Activated B cell treated with CpG ODN at 0.5 μM for 24 hours (primary cell): ENCODE measurements at regions of chr1 and their contacts with region 1.

Region 1: DNA sequence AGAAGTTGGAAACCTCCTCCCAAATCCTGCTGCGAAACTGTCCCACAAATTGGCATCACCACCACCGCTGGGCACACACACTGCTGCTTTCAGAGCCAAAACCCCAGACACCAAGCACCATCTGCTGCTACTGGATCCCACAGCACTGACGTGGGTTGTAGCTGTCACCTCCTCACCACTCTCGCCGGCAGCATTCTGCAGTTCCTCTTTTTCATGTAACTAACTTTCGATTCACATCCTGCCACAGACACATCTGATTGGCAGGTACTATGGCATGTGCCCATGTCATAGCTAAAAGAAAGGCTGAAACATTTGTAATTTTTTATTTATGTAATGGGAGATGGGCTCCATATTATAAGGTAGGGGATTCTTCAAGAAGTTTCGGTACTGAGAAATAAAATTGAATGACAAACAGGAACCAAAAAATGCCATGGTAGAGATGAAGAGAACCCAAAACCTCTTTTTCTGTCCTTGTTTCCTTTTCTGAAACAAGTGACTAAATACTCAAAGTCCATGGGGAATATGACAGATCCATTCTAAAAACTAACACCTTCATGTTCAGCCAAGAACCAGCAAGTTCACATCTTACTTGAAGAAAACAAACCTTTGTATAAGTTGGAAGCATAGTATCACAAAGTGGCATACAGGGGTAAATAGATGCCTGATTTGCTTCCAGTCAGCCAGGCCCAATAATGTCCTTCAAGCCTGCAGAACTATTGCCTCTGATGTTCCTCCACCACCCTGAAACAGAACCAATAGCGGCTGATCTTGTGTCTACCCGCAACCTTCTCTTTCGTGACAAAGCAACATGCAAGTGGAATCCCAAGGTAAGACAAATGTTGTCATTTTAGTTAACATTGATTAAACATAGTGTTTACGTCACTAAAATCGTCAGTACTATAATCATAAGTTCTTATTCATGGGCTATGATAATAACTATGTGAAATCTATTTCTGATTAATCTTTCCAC is 26.6 kb upstream of the RGS13 start:
- DNase-seq: peak; percentile 56
- ATAC-seq: peak; percentile 91
- H3K4me3 Mint-ChIP-seq: peak overlapping the region; percentile 57
- H3K27ac Mint-ChIP-seq: peak overlapping the region; percentile 86
- H3K4me1 Mint-ChIP-seq: peaks cover 32% of the 10 kb centered on the region
- H3K27me3 Mint-ChIP-seq: peaks cover 4% of the 10 kb centered on the region
- CTCF ChIP-seq: no peak

Region 2: DNA sequence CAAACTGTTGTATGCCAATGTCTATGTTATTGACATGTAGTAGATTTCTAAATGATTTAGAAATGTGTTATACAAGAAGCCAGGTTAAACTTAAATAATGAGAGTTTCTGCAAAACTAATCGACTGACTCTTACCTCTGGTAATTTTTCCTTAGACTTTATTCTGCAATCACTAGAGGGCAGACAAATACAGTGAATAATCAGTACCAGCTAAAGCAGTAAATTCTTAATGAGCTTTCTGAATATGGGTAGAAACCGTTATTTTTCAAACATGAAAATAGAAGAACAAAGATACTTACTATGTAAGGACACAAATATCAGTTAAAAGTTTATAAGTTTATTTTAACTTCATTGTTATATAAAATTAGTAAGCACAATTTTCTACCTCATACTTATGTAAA is 131.8 kb before region 1 on chr1:
- CTCF ChIA-PET with region 1: interaction called, 106 read pairs
- POLR2A ChIA-PET with region 1: interaction called, 6 read pairs
- intact Hi-C with region 1: loop called (anchors 1 kb)
- DNase-seq: no peak
- ATAC-seq: peak; percentile 75
- H3K4me3 Mint-ChIP-seq: no peak overlapping the region
- H3K27ac Mint-ChIP-seq: no peak overlapping the region
- H3K4me1 Mint-ChIP-seq: no peaks in the 10 kb centered on the region
- H3K27me3 Mint-ChIP-seq: peaks cover 7% of the 10 kb centered on the region
- CTCF ChIP-seq: peak; percentile 26

Region 3: DNA sequence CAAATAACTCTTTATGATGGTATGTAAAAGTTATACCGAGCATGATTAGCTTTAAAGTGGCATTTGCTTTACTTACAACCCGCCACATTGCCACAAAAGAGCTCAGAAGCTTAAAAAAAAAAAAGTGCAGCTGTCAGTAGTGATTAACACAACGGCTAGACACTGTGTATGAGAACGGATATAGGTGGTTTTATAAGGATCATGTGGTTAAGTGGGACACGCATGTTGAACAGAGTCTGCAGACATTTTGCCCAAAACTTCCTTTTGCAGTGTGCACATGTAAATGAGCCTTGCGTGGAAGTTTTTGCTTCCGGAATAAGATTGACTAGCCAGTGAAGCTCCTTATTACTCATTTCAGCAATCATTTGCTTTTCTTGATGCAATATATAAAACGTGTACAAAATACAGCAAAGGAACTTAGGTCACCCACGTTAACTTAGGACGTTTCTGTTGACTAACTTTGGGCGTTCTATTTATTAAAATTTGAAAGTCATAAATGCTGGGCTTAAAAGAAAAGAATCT is 92.6 kb before region 1 on chr1:
- CTCF ChIA-PET with region 1: interaction called, 9 read pairs
- POLR2A ChIA-PET with region 1: interaction called, 10 read pairs
- intact Hi-C with region 1: loop called (anchors 1 kb)
- DNase-seq: peak; percentile 23
- ATAC-seq: peak; percentile 96
- H3K4me3 Mint-ChIP-seq: peak overlapping the region; percentile 75
- H3K27ac Mint-ChIP-seq: peak overlapping the region; percentile 65
- H3K4me1 Mint-ChIP-seq: peaks cover 59% of the 10 kb centered on the region
- H3K27me3 Mint-ChIP-seq: no peaks in the 10 kb centered on the region
- CTCF ChIP-seq: no peak

Region 4: GRCh38 chr1:192545896-192546521 is 63.4 kb before region 1 on chr1:
- CTCF ChIA-PET with region 1: interaction called, 3 read pairs
- POLR2A ChIA-PET with region 1: interaction called, 12 read pairs
- intact Hi-C with region 1: loop called (anchors 1 kb)
- DNase-seq: no peak
- ATAC-seq: peak; percentile 66
- H3K4me3 Mint-ChIP-seq: peak overlapping the region; percentile 65
- H3K27ac Mint-ChIP-seq: peak overlapping the region; percentile 84
- H3K4me1 Mint-ChIP-seq: peaks cover 60% of the 10 kb centered on the region
- H3K27me3 Mint-ChIP-seq: no peaks in the 10 kb centered on the region
- CTCF ChIP-seq: no peak

Region 5: DNA sequence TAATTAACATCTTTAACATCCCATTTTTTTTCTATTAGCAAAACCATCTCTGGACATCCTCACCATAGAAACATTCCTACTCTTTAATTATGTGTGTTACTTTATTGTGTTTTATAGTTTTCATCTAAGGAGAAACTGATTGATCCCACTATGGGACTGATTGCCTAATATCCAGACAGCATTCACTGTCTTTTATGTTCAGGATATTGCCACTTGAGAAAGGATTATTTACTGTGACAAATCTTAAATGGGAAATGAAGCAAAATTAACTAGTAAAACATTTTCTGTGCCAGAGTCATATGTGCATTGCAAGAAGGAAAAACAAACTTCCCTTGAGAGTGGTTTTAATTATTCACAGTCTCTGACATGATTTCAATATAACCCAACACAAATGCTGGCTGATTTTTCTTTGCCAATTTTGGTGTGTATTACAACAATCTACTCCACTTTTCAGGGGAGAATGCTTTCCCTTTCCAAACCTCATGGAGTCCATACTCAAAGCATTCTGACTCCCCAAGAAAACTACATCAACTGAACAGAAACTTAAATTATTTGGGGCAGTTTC is 10.8 kb after region 1 on chr1:
- CTCF ChIA-PET with region 1: interaction called, 3 read pairs
- POLR2A ChIA-PET with region 1: no interaction called
- intact Hi-C with region 1: loop called (anchors 1 kb)
- DNase-seq: no peak
- ATAC-seq: no peak
- H3K4me3 Mint-ChIP-seq: no peak overlapping the region
- H3K27ac Mint-ChIP-seq: no peak overlapping the region
- H3K4me1 Mint-ChIP-seq: no peaks in the 10 kb centered on the region
- H3K27me3 Mint-ChIP-seq: peaks cover 55% of the 10 kb centered on the region
- CTCF ChIP-seq: no peak

Region 6: DNA sequence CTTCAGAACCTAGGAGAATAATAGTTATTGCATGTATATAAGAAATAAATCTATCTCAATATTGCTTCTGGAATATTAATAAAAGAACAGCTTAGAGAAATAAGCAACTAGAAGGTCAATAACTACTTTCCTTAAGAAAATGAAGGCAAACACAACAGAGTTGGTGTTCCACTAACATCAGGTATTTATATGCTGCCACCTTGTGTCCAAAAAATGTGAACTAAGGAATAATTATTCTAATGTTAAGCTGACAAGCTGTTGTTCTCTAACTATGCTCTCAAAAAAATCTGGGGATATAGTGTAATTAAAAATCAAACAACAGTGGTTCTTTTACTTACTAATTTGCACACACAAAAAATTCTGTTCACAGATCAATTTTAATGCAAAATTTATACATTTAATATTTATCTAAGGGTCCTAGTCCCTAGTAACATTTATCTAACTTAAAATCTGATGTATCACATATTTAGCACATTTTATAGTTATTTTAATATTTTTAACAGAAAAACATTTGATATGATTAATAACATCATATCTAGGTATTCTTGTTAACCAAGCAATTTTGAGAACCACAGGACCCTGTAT is 410.1 kb after region 1 on chr1:
- CTCF ChIA-PET with region 1: interaction called, 8 read pairs
- POLR2A ChIA-PET with region 1: no interaction called
- intact Hi-C with region 1: loop called (anchors 1 kb)
- DNase-seq: no peak
- ATAC-seq: no peak
- H3K4me3 Mint-ChIP-seq: no peak overlapping the region
- H3K27ac Mint-ChIP-seq: no peak overlapping the region
- H3K4me1 Mint-ChIP-seq: no peaks in the 10 kb centered on the region
- H3K27me3 Mint-ChIP-seq: no peaks in the 10 kb centered on the region
- CTCF ChIP-seq: no peak

Region 7: DNA sequence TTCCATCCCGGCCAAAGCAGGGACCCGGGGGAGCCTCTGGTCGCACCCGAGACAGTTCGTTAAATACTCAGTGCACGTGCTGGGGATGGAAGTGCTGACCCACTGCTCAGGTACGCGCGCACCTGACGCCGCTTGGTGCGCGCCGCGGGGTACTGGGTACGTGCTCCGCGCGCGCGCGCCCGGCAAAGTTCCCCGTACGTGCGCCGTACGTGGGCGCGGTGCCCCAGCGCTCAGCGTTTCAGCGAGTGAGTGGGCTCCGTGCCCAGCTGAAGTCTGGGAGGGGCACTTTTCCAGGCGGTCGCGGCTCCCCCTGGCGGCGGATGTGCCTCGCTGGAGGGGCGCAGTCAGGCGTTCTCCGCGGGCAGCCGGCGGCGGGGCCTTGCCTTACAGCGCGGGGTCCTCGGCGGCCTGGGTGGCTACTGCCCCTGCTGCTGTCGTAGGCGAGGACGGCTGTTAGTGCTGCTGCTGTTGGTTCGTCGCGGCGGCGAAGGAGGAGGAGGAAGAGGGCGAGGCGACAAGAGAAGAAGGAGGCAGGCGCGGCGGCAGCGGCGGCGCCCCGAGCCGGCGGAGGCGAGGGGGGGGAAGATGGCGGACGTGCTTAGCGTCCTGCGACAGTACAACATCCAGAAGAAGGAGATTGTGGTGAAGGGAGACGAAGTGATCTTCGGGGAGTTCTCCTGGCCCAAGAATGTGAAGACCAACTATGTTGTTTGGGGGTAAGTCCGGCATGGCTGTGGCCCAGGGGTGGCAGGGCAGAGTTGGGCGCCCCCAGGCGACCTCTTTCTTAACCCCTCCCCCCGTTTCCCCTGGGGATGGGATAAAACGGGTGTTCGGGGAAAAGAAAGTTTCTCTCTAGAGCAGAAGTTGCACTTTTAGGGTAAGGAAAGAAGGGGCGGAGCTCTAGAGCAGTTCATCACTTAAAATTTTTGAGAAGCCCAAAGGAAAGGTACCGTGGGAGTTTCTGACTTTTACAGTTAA is 512.5 kb after region 1 on chr1 and contains the start of gene CDC73:
- CTCF ChIA-PET with region 1: no interaction called
- POLR2A ChIA-PET with region 1: no interaction called
- intact Hi-C with region 1: loop called (anchors 1 kb)
- DNase-seq: peak; percentile 99
- ATAC-seq: peak; percentile 90
- H3K4me3 Mint-ChIP-seq: peak within 1 kb of the TSS; percentile 93
- H3K27ac Mint-ChIP-seq: peak within 1 kb of the TSS; percentile 94
- H3K4me1 Mint-ChIP-seq: peaks cover 43% of the 10 kb centered on the region
- H3K27me3 Mint-ChIP-seq: no peaks in the 10 kb centered on the region
- CTCF ChIP-seq: peak; percentile 17
- total RNA-seq, gene CDC73: 55.9 and 59.1 TPM in 2 replicates